Panc1 (cell line): ENCODE measurements at regions of chr5 and their contacts with region 1.

Region 1: GRCh38 chr5:66582499-66583165 is 13.6 kb upstream of the MAST4 start:
- DNase-seq: no peak
- ATAC-seq: no peak
- H3K4me3 ChIP-seq: no peak overlapping the region
- H3K27ac ChIP-seq: no peak overlapping the region
- H3K4me1 ChIP-seq: no peaks in the 10 kb centered on the region
- H3K27me3 ChIP-seq: peaks cover 3% of the 10 kb centered on the region
- CTCF ChIP-seq: no peak

Region 2: GRCh38 chr5:66680739-66681138 is 98.1 kb after region 1 on chr5:
- CTCF ChIA-PET with region 1: no interaction called
- POLR2A ChIA-PET with region 1: no interaction called
- in situ Hi-C with region 1: no loop called
- intact Hi-C with region 1: no loop called
- DNase-seq: no peak
- ATAC-seq: no peak
- H3K4me3 ChIP-seq: no peak overlapping the region
- H3K27ac ChIP-seq: no peak overlapping the region
- H3K4me1 ChIP-seq: no peaks in the 10 kb centered on the region
- H3K27me3 ChIP-seq: no peaks in the 10 kb centered on the region; the same call in 1 of the 2 replicates
- CTCF ChIP-seq: no peak

Region 3: GRCh38 chr5:66701244-66701643 is 118.6 kb after region 1 on chr5:
- CTCF ChIA-PET with region 1: no interaction called
- POLR2A ChIA-PET with region 1: no interaction called
- in situ Hi-C with region 1: no loop called
- intact Hi-C with region 1: loop called (anchors 5 kb)
- DNase-seq: no peak
- ATAC-seq: no peak
- H3K4me3 ChIP-seq: no peak overlapping the region
- H3K27ac ChIP-seq: no peak overlapping the region
- H3K4me1 ChIP-seq: no peaks in the 10 kb centered on the region
- H3K27me3 ChIP-seq: peaks cover 3% of the 10 kb centered on the region; the same call in 1 of the 2 replicates
- CTCF ChIP-seq: no peak